CD4-positive, alpha-beta memory T cell (primary cell): ENCODE measurements at regions of chr12 and their contacts with region 1.

Region 1: DNA sequence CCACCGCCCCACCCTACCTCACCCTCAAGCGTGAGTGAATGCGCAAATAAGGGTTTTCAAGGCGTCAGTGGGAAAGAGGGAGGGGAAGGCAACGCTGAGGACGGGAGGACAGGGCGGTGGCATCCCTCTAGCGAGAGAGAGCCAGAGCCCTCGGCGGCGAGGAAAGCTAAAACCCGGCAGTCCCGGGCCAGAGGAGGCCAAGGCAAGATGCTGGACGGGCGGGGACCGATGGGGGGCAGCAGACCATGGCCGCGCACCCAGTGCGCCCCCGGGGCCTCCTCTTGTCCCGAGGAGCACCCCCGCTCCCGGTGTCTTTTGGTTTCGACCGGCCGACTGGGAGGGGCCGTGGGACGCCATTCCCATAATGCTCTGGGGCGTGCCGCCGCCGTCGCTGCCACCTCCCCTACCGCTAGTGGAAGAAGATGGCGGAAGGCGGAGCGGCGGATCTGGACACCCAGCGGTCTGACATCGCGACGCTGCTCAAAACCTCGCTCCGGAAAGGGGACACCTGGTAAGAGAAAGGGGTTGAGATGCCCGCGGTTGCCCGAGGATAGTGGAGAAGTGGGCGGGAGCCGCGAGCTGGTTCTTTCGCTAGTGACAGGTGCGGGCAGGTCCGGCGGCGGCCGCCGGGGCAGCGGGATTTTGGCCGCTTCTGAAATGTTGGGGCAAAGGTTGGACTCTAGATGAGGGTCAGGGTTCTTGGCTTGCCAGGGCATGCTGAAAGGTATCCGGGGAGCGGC is at the start of gene USP15:
- DNase-seq: peak; percentile 95 to 98 (median 97)
- H3K4me3 ChIP-seq: peak within 1 kb of the TSS; percentile 82 to 94
- H3K4me3 Mint-ChIP-seq: peak within 1 kb of the TSS; percentile 93 to 100 (median 98)
- H3K27ac ChIP-seq: peak within 1 kb of the TSS; percentile 90
- H3K27ac Mint-ChIP-seq: peak within 1 kb of the TSS; percentile 95 to 100 (median 99)
- H3K4me1 ChIP-seq: peaks cover 71% of the 10 kb centered on the region
- H3K4me1 Mint-ChIP-seq: peaks cover 31 to 76% (median 41%) of the 10 kb centered on the region in 4 donors
- H3K27me3 ChIP-seq: no peaks in the 10 kb centered on the region
- H3K27me3 Mint-ChIP-seq: no peaks in the 10 kb centered on the region
- total RNA-seq, gene USP15: 150 to 156 TPM

Region 2: GRCh38 chr12:62210422-62210821 is 49.7 kb before region 1 on chr12:
- CTCF ChIA-PET with region 1: interaction called, 4 read pairs
- POLR2A ChIA-PET with region 1: interaction called, 19 read pairs
- intact Hi-C with region 1: loop called (anchors 1 kb)
- DNase-seq: peak in 4 of 5 donors; percentile 19 to 34 (median 29)
- H3K4me3 ChIP-seq: no peak overlapping the region
- H3K4me3 Mint-ChIP-seq: no peak overlapping the region
- H3K27ac ChIP-seq: no peak overlapping the region
- H3K27ac Mint-ChIP-seq: peak overlapping the region in 1 of 7 donors; percentile 33
- H3K4me1 ChIP-seq: peaks cover 11% of the 10 kb centered on the region
- H3K4me1 Mint-ChIP-seq: peaks cover 0 to 18% (median 6%) of the 10 kb centered on the region in 4 donors
- H3K27me3 ChIP-seq: no peaks in the 10 kb centered on the region
- H3K27me3 Mint-ChIP-seq: peaks cover 9 to 10% of the 10 kb centered on the region in 2 donors

Region 3: GRCh38 chr12:62297321-62297720 is 37.2 kb after region 1 on chr12:
- CTCF ChIA-PET with region 1: no interaction called
- POLR2A ChIA-PET with region 1: no interaction called
- intact Hi-C with region 1: loop called (anchors 5 kb)
- DNase-seq: no peak
- H3K4me3 ChIP-seq: no peak overlapping the region
- H3K4me3 Mint-ChIP-seq: peak overlapping the region in 1 of 8 donors; percentile 50
- H3K27ac ChIP-seq: no peak overlapping the region
- H3K27ac Mint-ChIP-seq: peak overlapping the region in 4 of 7 donors; percentile 22 to 83 (median 53)
- H3K4me1 ChIP-seq: peaks cover 29% of the 10 kb centered on the region
- H3K4me1 Mint-ChIP-seq: peaks cover 37 to 77% (median 57%) of the 10 kb centered on the region in 4 donors
- H3K27me3 ChIP-seq: no peaks in the 10 kb centered on the region
- H3K27me3 Mint-ChIP-seq: no peaks in the 10 kb centered on the region

Region 4: GRCh38 chr12:62361048-62361447 is 100.9 kb after region 1 on chr12:
- CTCF ChIA-PET with region 1: interaction called, 3 read pairs
- POLR2A ChIA-PET with region 1: interaction called, 3 read pairs
- intact Hi-C with region 1: loop called (anchors 5 kb)
- DNase-seq: no peak
- H3K4me3 ChIP-seq: no peak overlapping the region
- H3K4me3 Mint-ChIP-seq: no peak overlapping the region
- H3K27ac ChIP-seq: no peak overlapping the region
- H3K27ac Mint-ChIP-seq: no peak overlapping the region
- H3K4me1 ChIP-seq: peaks cover 4% of the 10 kb centered on the region
- H3K4me1 Mint-ChIP-seq: peaks cover 19 to 32% (median 29%) of the 10 kb centered on the region in 4 donors
- H3K27me3 ChIP-seq: no peaks in the 10 kb centered on the region
- H3K27me3 Mint-ChIP-seq: no peaks in the 10 kb centered on the region

Region 5: GRCh38 chr12:62799126-62799736 is 539.1 kb after region 1 on chr12:
- CTCF ChIA-PET with region 1: no interaction called
- POLR2A ChIA-PET with region 1: no interaction called
- intact Hi-C with region 1: loop called (anchors 10 kb)
- DNase-seq: peak; percentile 32 to 52 (median 44)
- H3K4me3 ChIP-seq: no peak overlapping the region
- H3K4me3 Mint-ChIP-seq: no peak overlapping the region
- H3K27ac ChIP-seq: no peak overlapping the region
- H3K27ac Mint-ChIP-seq: no peak overlapping the region
- H3K4me1 ChIP-seq: no peaks in the 10 kb centered on the region
- H3K4me1 Mint-ChIP-seq: peaks cover 0 to 1% (median 0%) of the 10 kb centered on the region in 4 donors
- H3K27me3 ChIP-seq: no peaks in the 10 kb centered on the region
- H3K27me3 Mint-ChIP-seq: peaks cover 4 to 5% of the 10 kb centered on the region in 2 donors